ENCODE measurements at regions of chr11 and their contacts with region 1.

Region 1: GRCh38 chr11:74255741-74256369 is 55.6 kb downstream of the P4HA3 start:
- DNase-seq: peak; percentile 81
- H3K4me3 ChIP-seq: no peak overlapping the region
- H3K27ac ChIP-seq: no peak overlapping the region
- H3K4me1 ChIP-seq: no peaks in the 10 kb centered on the region
- H3K27me3 ChIP-seq: no peaks in the 10 kb centered on the region
- CTCF ChIP-seq: peak; percentile 83 to 94
- POLR2A ChIP-seq: no peak

Region 2: GRCh38 chr11:74090701-74091100 is 165.2 kb before region 1 on chr11:
- CTCF ChIA-PET with region 1: no interaction called
- POLR2A ChIA-PET with region 1: no interaction called
- dilution Hi-C with region 1: no loop called
- intact Hi-C with region 1: no loop called
- DNase-seq: no peak
- H3K4me3 ChIP-seq: no peak overlapping the region
- H3K27ac ChIP-seq: no peak overlapping the region
- H3K4me1 ChIP-seq: no peaks in the 10 kb centered on the region
- H3K27me3 ChIP-seq: no peaks in the 10 kb centered on the region
- CTCF ChIP-seq: no peak
- POLR2A ChIP-seq: no peak

Region 3: DNA sequence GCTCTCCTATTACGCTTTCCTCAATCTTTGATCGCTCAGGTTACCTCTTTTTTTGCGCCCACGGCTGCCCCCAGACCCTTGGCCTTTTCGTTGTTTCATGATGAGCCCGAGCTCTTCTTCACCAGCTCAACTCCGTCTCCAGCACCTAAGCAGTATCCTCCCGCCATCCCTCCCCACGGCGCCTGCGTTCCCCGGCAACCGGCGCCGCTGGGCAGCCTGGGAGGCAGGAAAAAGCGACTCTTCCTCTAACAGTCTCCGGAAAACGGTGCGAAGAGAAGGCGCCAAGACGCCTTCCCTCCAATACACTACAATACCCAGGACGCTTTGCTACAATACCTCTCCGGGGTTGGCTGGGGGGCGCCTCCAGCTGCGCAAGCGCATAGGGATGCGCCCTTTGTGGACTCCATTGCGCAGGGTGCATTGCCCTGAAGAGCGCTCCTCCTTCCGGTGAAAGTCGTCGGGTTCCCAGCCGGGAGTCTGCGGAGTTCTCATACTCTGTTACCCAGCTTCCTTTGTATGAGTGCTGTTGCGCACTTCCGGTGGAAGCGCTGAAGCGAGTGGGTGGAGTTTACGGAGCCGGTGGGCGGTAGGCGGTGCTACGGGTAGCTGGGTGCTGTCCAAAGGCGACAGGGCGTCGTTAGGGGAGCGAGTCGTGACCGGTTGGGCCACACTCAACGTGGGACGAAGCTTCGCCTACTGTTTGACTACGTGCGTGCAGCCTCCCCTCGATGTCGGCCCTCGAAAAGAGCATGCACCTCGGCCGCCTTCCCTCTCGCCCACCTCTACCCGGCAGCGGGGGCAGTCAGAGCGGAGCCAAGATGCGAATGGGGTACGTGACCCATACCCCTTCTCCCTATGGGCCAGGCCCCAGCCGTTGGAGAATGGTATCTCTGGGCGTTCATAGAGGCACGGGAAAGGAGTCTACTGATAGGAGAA is 84.9 kb before region 1 on chr11 and contains the starts of genes C2CD3 and PPME1:
- CTCF ChIA-PET with region 1: interaction called, 11 read pairs
- POLR2A ChIA-PET with region 1: no interaction called
- dilution Hi-C with region 1: no loop called
- intact Hi-C with region 1: no loop called
- DNase-seq: peak; percentile 100
- H3K4me3 ChIP-seq: peak within 1 kb of the TSS; percentile 67 to 93 (median 74)
- H3K27ac ChIP-seq: peak within 1 kb of the TSS; percentile 84
- H3K4me1 ChIP-seq: peaks cover 17% of the 10 kb centered on the region
- H3K27me3 ChIP-seq: no peaks in the 10 kb centered on the region
- CTCF ChIP-seq: peak in 1 of 2 donors; percentile 5
- POLR2A ChIP-seq: no peak
- total RNA-seq, gene C2CD3: 26.2 and 36.6 TPM in 2 replicates
- total RNA-seq, gene PPME1: 35.0 and 37.2 TPM in 2 replicates

Region 4: DNA sequence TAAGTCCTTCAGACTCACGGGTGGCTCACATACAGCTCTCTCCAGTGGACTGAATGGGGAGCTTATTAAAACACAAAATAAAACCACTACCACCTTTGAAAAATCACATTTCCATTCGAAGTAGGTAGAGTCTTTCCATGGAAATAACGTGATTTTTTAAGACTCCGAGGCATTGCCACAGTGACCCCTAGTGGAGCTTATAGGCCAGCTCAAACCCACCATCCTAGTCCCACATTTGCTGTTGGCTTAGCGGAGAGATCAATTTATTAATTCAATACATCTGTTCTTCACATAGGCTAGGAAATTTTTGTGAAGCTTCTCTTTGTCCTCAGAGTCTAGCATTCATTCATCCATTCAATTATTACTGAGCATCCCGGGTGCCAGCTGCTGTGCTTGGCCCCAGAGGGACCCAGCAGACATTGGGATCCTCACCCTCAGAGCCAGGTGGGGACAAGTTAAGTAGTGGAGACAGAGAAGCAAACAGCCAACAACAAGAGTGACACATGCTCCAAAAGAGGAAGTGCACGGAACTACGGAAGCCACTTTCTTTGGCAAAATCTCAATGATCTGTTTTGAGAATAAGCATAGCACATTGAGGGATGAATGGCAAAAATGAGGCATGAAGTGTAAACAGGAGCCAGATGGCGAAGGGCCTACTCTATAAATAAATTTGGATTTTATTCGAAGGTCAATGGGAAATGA is 65.8 kb after region 1 on chr11:
- CTCF ChIA-PET with region 1: interaction called, 136 read pairs
- POLR2A ChIA-PET with region 1: no interaction called
- dilution Hi-C with region 1: no loop called
- intact Hi-C with region 1: loop called (anchors 1 kb)
- DNase-seq: peak; percentile 99
- H3K4me3 ChIP-seq: no peak overlapping the region
- H3K27ac ChIP-seq: peak overlapping the region; percentile 87
- H3K4me1 ChIP-seq: peaks cover 60% of the 10 kb centered on the region
- H3K27me3 ChIP-seq: no peaks in the 10 kb centered on the region
- CTCF ChIP-seq: peak; percentile 65 to 74
- POLR2A ChIP-seq: peak; percentile 16

Region 5: GRCh38 chr11:74357449-74357848 is 101.6 kb after region 1 on chr11:
- CTCF ChIA-PET with region 1: interaction called, 11 read pairs
- POLR2A ChIA-PET with region 1: no interaction called
- dilution Hi-C with region 1: no loop called
- intact Hi-C with region 1: no loop called
- DNase-seq: no peak
- H3K4me3 ChIP-seq: no peak overlapping the region
- H3K27ac ChIP-seq: no peak overlapping the region
- H3K4me1 ChIP-seq: no peaks in the 10 kb centered on the region
- H3K27me3 ChIP-seq: no peaks in the 10 kb centered on the region
- CTCF ChIP-seq: no peak
- POLR2A ChIP-seq: no peak

Region 6: DNA sequence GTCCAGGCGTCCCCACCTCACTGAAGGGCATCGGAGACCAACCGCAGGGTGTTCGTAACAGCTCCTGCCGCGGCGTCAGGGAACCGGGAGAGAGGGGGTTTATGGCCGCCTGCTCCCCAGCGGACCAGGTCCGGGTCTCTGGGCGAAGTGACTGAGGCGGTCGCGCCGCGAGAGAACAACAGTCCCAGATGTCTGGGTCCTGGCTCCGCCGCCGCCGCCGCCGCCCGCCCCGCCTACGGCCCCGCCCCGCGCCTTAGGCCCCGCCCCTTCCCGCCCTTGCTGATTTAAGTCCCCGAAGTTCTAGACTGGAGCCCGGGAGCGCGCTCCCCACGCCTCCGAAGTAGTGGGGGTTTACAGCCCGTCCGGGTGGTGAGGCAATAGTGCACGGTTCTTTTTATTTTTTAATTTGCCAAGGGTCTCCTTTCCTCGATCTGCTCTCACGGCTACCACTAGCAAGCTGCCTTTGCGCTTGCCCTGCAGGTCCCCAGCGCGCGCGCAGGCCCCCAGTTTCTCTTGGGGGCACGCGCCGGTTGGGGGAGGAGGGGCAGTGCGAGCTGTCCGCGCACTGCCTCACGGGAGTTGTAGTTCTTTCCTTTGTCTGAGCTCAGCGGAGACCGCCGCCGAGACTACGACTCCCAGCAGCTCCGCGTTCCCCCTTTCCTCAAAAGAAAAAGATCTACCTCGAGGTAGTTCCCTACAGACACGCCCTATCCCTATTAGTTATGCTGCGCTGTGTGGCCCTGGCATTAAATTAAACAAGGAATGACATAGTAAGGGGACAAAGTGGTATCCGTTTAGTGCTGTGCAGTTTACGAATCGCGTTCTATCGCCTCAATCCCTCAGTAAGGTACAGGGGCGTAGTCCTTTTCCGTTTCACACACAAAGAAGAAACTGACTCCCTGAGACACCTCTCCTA is 142.6 kb after region 1 on chr11 and contains the start of gene PGM2L1:
- CTCF ChIA-PET with region 1: interaction called, 20 read pairs
- POLR2A ChIA-PET with region 1: no interaction called
- dilution Hi-C with region 1: no loop called
- intact Hi-C with region 1: no loop called
- DNase-seq: peak; percentile 95
- H3K4me3 ChIP-seq: peak within 1 kb of the TSS; percentile 36 to 96 (median 73)
- H3K27ac ChIP-seq: peak within 1 kb of the TSS; percentile 67
- H3K4me1 ChIP-seq: peaks cover 12% of the 10 kb centered on the region
- H3K27me3 ChIP-seq: no peaks in the 10 kb centered on the region
- CTCF ChIP-seq: no peak
- POLR2A ChIP-seq: peak; percentile 87
- total RNA-seq, gene PGM2L1: 24.7 and 31.4 TPM in 2 replicates

Region 7: DNA sequence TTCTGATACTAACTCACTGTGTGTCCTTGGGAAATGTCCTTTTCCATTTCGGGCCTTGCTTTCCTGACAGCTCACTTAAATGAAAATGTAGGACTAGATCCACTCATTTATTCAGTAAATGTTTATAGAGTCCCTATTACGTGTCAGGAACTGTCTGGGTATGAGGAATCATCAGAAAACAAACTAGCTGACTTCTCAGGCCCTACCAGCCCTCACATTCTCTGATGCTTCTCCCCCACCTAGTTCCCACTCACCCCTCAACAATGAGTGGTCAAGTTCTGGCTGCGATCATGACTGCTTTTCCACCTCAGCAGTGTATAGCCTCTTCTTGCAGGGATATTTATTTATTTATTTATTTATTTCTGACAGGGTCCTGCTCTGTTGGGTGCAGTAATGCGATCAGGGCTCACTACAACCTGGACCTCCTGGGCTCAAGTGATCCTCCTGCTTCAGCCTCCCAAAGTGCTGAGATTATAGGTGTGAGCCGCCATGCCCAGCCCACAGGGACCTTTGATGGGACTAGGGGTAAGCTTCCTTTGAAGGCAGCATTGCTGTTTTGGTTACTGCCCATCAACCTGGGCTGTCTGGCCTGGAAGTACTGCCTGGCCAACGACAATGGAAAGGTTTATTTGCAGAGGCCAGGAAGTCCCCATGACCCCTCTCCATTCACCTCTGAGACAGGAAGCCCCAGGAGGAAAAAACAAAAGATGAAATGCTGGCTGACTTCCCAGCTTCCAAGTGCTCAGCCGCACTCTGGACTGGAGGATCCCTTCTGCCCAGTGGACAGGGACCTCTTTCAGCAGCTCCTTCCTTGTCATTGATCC is 303.5 kb after region 1 on chr11:
- CTCF ChIA-PET with region 1: interaction called, 11 read pairs
- POLR2A ChIA-PET with region 1: no interaction called
- dilution Hi-C with region 1: no loop called
- intact Hi-C with region 1: no loop called
- DNase-seq: peak; percentile 93
- H3K4me3 ChIP-seq: no peak overlapping the region
- H3K27ac ChIP-seq: peak overlapping the region; percentile 18
- H3K4me1 ChIP-seq: peaks cover 16% of the 10 kb centered on the region
- H3K27me3 ChIP-seq: no peaks in the 10 kb centered on the region
- CTCF ChIP-seq: no peak
- POLR2A ChIP-seq: no peak